ENCODE measurements at regions of chr7 and their contacts with region 1.

Region 1: DNA sequence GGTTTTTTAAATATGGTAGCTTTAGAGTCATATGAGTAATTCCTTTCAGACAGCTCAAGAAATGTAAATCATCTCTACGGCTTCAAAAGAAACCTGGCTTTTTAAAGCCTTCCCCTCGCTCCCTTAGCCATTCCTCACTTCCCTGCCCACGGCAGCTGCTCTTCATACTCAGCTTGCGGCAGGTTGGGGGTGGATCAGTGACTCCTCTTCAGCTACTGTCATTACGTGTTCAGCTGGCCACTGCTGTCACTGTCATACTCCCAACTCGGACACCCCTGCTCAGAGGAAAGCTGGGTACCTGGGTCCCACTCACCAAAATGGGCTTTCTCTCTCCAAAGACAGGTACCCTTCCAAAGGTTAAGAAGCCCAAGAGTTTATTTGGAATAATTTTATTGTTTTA is 6.6 kb downstream of the YWHAG start:
- DNase-seq: no peak
- ATAC-seq: peak; percentile 20
- H3K4me3 ChIP-seq: no peak overlapping the region
- H3K27ac ChIP-seq: no peak overlapping the region
- H3K4me1 ChIP-seq: peaks cover 4 to 19% of the 10 kb centered on the region in 2 experiments; a peak in 4 of 5 replicates
- H3K27me3 ChIP-seq: no peaks in the 10 kb centered on the region
- CTCF ChIP-seq: no peak
- EP300 ChIP-seq: no peak
- POLR2A ChIP-seq: 0 out of 2 replicates have a peak, but pooled peaks have one; percentile 12
- RAD21 ChIP-seq: no peak

Region 2: GRCh38 chr7:76333511-76334101 is 18.6 kb before region 1 on chr7:
- CTCF ChIA-PET with region 1: no interaction called
- POLR2A ChIA-PET with region 1: interaction called, 15 read pairs
- in situ Hi-C with region 1: no loop called
- intact Hi-C with region 1: no loop called
- DNase-seq: no peak
- ATAC-seq: no peak
- H3K4me3 ChIP-seq: no peak overlapping the region
- H3K27ac ChIP-seq: no peak overlapping the region
- H3K4me1 ChIP-seq: peaks cover 16 to 25% of the 10 kb centered on the region in 2 experiments; a peak in 4 of 5 replicates
- H3K27me3 ChIP-seq: no peaks in the 10 kb centered on the region
- CTCF ChIP-seq: no peak
- EP300 ChIP-seq: no peak
- POLR2A ChIP-seq: no peak
- RAD21 ChIP-seq: no peak

Region 3: GRCh38 chr7:76340617-76341131 is 11.5 kb before region 1 on chr7:
- CTCF ChIA-PET with region 1: no interaction called
- POLR2A ChIA-PET with region 1: interaction called, 13 read pairs
- in situ Hi-C with region 1: no loop called
- intact Hi-C with region 1: no loop called
- DNase-seq: peak in 1 of 4 experiments; percentile 44
- ATAC-seq: peak; percentile 47
- H3K4me3 ChIP-seq: no peak overlapping the region
- H3K27ac ChIP-seq: peak overlapping the region; percentile 78
- H3K4me1 ChIP-seq: peaks cover 19 to 33% of the 10 kb centered on the region in 2 experiments; a peak in 4 of 5 replicates
- H3K27me3 ChIP-seq: no peaks in the 10 kb centered on the region
- CTCF ChIP-seq: no peak
- EP300 ChIP-seq: no peak
- POLR2A ChIP-seq: no peak
- RAD21 ChIP-seq: no peak